ENCODE measurements at regions of chr2 and their contacts with region 1.

Region 1: DNA sequence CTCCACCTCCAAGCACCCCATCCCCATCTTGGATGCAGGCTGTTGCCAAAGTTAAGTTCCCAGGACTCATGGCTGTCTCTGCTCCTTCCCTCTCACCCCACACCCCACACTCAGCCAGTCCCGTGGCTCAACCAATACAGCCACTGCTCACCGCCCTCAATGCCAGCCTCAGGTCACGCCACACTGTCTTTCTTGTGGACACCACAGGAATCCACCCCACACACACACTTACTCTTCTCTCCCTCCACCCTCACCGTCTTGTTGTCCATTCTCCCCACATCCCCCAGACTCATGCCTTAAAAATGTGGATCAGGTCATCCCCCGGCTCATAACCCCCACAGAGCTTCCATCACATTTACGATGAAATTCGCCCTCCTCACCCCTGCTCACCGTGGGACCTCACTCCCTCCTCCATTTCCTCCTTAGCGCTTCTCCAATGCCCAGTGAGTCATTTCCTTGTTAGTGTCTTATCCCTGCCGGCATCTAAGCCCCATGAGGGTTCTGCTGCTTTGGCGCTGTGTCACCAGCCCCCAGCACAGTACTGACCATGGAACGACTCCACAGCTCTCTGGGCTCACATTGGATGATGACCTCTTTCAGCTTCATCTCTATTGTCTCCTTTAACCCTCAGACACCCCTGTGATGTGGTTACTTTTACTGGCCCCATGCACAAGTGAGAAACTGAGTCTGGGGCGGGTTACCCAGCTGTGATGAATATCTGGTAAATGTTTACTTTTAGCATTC is 13.8 kb downstream of the MLPH start:
- DNase-seq: peak; percentile 95 to 100
- H3K4me3 ChIP-seq: peak overlapping the region; percentile 21; the same call in 1 of the 2 replicates
- H3K27ac ChIP-seq: peak overlapping the region; percentile 93
- H3K4me1 ChIP-seq: peaks cover 68% of the 10 kb centered on the region
- H3K27me3 ChIP-seq: no peaks in the 10 kb centered on the region
- CTCF ChIP-seq: no peak

Region 2: DNA sequence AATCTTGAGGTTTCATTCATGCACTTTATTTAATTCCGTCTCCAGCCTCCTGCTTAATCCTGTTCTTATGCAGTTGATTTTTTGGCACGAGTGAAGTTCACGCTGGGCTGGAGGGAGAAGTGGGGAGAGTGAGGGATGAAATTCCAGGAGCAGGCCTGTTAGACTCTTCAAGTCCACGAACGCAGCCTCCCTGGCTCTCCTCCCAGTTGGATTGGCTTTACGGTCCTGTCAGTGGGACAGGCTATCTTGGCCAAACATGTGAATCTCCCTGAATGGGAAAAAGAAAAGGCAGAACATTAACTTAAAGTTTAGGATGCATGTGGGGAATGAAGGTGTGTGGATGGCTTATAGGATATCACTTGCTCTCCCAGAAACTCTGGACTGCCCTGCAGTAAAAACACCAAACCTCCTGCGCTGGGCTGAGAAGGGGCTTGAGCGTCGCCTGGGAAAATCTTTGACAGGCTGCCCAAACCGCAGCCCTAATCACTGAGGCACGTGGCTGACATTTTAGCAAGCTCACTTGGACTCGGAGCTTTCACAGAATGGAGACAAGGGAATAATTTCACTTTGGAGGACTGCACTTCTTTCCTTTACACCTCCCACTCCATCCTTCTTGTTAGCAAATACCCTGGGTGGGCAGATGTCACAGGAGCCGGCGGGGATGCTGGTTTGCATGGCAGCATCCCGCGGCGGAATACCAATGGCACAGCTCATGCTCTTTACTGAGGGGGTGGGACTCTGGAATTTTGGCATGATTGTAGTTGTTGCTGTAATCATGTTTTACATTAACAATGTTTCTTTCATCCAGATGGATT is 837.4 kb before region 1 on chr2:
- CTCF ChIA-PET with region 1: interaction called, 14 read pairs
- POLR2A ChIA-PET with region 1: no interaction called
- intact Hi-C with region 1: no loop called
- DNase-seq: peak in 1 of 2 experiments; percentile 25
- H3K4me3 ChIP-seq: no peak overlapping the region
- H3K27ac ChIP-seq: no peak overlapping the region
- H3K4me1 ChIP-seq: peaks cover 29% of the 10 kb centered on the region
- H3K27me3 ChIP-seq: peaks cover 8% of the 10 kb centered on the region
- CTCF ChIP-seq: no peak

Region 3: GRCh38 chr2:237262838-237263771 is 237.7 kb before region 1 on chr2:
- CTCF ChIA-PET with region 1: no interaction called
- POLR2A ChIA-PET with region 1: no interaction called
- intact Hi-C with region 1: no loop called
- DNase-seq: peak in 1 of 2 experiments; percentile 58
- H3K4me3 ChIP-seq: no peak overlapping the region
- H3K27ac ChIP-seq: no peak overlapping the region
- H3K4me1 ChIP-seq: peaks cover 13% of the 10 kb centered on the region; the same call in 1 of the 2 replicates
- H3K27me3 ChIP-seq: no peaks in the 10 kb centered on the region
- CTCF ChIP-seq: no peak

Region 4: DNA sequence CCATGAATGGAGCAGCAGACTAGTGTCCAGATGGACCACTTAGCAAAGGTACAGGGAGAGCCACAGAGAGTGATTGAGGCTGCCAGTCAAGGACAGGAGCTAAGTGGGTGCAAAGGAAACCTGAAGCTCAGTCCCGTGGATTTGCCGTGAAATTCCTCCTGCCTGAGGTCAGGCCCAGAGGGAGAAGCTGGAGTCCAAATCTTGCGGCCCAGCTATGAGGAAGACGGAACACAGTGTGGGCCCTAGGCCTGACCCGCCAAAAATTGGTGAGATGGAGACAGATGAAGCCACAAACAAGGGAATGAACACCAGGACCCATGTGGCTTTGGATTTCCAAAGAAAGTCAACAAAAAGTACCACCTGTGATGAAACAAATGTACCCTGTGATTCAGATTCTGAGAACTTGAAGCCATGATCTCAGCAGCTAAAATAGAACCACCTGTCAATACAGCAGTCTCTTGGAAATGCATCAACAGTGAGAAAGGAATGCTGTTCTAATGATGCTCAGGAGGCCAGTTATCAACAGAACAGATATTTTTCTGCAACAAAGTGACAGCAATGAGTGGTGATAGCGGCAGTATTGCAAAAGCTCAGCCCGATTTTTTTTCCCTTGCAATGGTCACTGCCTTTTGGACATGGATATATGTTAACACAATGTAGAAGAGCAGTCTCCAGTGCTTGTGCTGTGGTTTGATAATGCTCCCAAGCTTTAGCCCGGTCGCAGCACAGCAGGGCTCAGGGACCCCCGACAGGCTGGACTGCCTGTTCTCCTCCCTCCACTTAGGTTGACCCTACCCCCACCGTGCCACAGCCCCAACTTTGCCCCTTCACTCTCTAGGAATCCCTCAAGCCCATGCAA is 97.6 kb before region 1 on chr2:
- CTCF ChIA-PET with region 1: no interaction called
- POLR2A ChIA-PET with region 1: no interaction called
- intact Hi-C with region 1: no loop called
- DNase-seq: no peak
- H3K4me3 ChIP-seq: no peak overlapping the region
- H3K27ac ChIP-seq: no peak overlapping the region
- H3K4me1 ChIP-seq: no peaks in the 10 kb centered on the region
- H3K27me3 ChIP-seq: peaks cover 39% of the 10 kb centered on the region
- CTCF ChIP-seq: no peak

Region 5: DNA sequence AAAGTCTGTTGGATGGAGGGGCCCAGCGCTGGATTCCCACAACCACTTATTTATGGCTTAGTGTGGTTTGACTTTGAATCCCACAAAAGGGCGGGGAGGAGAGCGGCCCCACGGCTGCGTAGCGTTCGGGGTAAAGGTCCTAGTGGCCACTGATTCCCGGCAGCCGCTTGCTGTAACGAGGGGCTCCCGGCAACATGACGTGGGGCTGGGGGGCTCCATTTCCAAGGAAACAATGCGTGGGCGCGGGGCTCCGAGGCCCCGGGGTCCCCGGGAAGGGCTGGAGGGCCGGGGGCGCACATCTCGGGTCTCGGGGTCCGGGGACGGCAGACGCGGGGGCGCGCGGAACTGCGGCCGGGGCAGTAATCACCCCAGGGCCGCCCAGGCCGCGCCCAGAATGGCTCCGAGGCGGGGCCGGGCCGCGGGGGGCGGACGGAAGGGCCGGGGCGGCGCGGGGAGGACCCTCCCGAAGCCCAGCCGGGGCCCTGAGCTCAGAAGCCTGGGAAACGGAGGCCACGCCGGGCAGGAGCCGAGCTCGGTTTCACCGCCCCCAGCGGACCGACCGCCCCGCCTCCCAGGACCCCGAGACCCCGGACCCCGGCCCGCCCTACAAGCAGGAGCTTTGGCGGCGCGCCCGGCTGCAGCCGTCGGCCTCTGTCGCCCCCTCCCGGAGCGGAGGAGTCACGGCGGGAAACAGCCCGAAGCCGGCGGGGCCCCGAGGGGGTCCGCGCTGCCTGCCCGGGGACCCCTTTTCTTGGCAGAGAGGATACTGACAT is 25.7 kb before region 1 on chr2:
- CTCF ChIA-PET with region 1: interaction called, 12 read pairs
- POLR2A ChIA-PET with region 1: interaction called, 12 read pairs
- intact Hi-C with region 1: loop called (anchors 1 kb)
- DNase-seq: peak; percentile 53 to 90
- H3K4me3 ChIP-seq: peak overlapping the region; percentile 63
- H3K27ac ChIP-seq: peak overlapping the region; percentile 79
- H3K4me1 ChIP-seq: peaks cover 25% of the 10 kb centered on the region
- H3K27me3 ChIP-seq: no peaks in the 10 kb centered on the region
- CTCF ChIP-seq: peak; percentile 97

Region 6: DNA sequence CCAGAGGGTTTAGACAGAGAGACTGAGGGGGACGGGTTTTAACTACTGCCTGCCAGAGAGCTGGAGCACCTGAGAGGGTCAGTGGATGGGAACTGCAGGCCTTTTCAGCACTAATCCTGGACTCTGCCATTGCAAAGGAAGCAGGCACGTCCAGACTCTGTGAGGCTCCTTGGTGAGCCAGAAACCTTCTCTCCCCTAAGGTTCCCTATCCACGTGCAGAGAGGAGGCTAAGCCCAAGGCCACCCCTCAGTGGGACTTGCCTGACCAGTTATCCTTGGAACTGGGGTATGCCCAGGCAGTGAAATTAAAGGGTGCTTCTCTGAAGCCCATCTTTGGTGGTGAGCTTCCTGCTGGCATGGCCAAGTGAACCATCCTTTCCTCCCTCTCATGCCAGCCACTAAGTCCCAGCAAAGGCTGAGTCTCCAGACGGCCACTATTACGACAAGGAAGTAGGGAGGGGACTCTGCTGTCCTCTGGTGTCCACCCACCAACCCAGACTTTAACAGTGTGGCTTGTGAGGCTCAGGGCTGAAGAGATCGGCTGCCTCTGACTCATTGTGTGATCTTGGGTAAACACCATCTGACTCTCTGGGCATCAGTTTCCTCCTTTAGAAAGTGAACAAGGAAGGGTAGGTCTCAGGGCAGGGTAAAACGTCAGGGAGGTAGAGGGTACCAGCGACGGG is 17.7 kb before region 1 on chr2:
- CTCF ChIA-PET with region 1: interaction called, 3 read pairs
- POLR2A ChIA-PET with region 1: interaction called, 12 read pairs
- intact Hi-C with region 1: loop called (anchors 2 kb)
- DNase-seq: peak; percentile 88 to 98
- H3K4me3 ChIP-seq: no peak overlapping the region
- H3K27ac ChIP-seq: peak overlapping the region; percentile 66
- H3K4me1 ChIP-seq: peaks cover 41% of the 10 kb centered on the region
- H3K27me3 ChIP-seq: no peaks in the 10 kb centered on the region
- CTCF ChIP-seq: peak; percentile 73

Region 7: DNA sequence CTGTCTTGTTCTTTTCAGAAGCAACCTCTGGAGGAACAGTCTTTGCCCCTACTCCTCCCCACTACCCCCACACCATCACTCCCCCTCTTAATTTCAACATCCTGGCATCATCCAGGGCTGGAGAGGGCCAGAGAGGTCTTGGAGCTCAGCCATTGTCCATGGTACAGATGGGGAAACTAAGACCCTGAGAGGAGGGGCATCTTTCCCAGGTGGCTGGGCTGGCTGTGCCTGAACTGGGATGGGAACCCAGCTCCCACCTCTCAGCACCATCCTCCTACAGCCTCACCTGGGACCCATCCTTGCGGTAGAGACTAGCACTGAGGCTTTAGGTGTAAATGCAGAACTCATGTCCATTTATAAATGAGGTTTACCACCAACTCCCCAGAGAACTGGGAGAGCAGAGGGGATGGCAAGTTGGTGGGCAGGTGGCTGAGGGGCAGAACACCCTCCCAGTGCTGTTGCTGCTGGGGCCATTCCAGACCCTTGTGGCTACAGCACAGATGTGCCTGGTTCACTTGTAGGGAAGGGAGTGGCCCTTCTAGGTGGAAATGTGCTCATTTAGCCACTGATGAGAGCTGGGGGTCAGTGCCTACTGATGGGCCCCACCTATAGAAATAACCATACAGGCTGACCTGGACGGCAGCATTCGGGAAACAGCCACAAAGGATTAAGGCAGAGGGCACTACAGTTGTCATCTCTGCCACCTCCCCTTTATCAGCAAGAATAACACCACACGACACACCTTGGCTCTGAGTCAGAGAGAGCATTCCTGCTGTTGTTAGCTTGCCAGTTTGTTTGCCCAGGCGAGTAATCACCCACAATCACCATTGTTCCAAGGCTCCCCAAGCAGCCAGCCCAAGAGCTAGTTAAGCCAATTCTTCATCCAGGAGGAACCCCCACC is 11.7 kb before region 1 on chr2:
- CTCF ChIA-PET with region 1: interaction called, 5 read pairs
- POLR2A ChIA-PET with region 1: interaction called, 42 read pairs
- intact Hi-C with region 1: loop called (anchors 1 kb)
- DNase-seq: peak; percentile 90 to 98
- H3K4me3 ChIP-seq: peak overlapping the region; percentile 70
- H3K27ac ChIP-seq: peak overlapping the region; percentile 99
- H3K4me1 ChIP-seq: peaks cover 68% of the 10 kb centered on the region
- H3K27me3 ChIP-seq: no peaks in the 10 kb centered on the region
- CTCF ChIP-seq: no peak

Region 8: DNA sequence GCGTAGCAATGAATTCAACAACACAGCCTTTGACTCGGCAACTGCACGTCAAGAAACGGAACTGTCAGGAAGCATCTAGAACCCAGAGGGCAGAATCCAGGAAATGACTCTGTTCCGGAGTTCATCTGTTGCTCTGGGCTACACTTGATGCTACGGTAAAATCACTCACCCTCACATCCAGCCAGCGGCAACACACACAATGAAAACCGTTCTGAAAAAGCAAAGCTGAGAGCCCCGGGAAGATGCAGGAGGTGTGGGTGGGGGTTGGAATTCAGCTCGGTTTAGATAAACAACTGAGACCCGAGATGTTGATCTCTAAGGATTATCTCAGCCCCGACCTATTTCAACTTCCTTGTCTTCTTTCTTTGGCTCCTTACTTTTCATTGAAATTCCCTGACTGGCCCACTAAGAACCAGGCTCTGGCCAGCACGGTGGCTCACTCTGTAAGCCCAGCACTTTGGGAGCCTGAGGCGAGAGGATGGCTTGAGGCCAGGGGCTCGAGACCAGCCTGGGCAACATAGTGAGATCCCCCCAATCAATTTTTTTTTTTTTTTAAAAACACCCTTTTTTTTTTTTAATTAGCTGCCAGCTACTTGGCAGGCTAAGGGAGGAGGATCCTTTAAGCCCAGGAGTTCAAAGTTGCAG is 103.0 kb after region 1 on chr2:
- CTCF ChIA-PET with region 1: no interaction called
- POLR2A ChIA-PET with region 1: interaction called, 18 read pairs
- intact Hi-C with region 1: no loop called
- DNase-seq: no peak
- H3K4me3 ChIP-seq: no peak overlapping the region
- H3K27ac ChIP-seq: no peak overlapping the region
- H3K4me1 ChIP-seq: no peaks in the 10 kb centered on the region
- H3K27me3 ChIP-seq: no peaks in the 10 kb centered on the region
- CTCF ChIP-seq: no peak

Region 9: GRCh38 chr2:237650455-237650850 is 149.6 kb after region 1 on chr2:
- CTCF ChIA-PET with region 1: no interaction called
- POLR2A ChIA-PET with region 1: no interaction called
- intact Hi-C with region 1: no loop called
- DNase-seq: peak; percentile 96 to 97
- H3K4me3 ChIP-seq: no peak overlapping the region
- H3K27ac ChIP-seq: no peak overlapping the region
- H3K4me1 ChIP-seq: peaks cover 19% of the 10 kb centered on the region
- H3K27me3 ChIP-seq: no peaks in the 10 kb centered on the region
- CTCF ChIP-seq: no peak

Region 10: GRCh38 chr2:237858294-237859081 is 357.6 kb after region 1 on chr2:
- CTCF ChIA-PET with region 1: no interaction called
- POLR2A ChIA-PET with region 1: no interaction called
- intact Hi-C with region 1: no loop called
- DNase-seq: peak; percentile 78 to 88
- H3K4me3 ChIP-seq: peak overlapping the region; percentile 64
- H3K27ac ChIP-seq: no peak overlapping the region
- H3K4me1 ChIP-seq: peaks cover 42% of the 10 kb centered on the region
- H3K27me3 ChIP-seq: no peaks in the 10 kb centered on the region
- CTCF ChIP-seq: peak; percentile 93